ENCODE measurements at regions of chr12 and their contacts with region 1.

Region 1: GRCh38 chr12:11202811-11203210 is 16.1 kb upstream of the TAS2R42 start:
- DNase-seq: no peak
- CTCF ChIP-seq: no peak

Region 2: GRCh38 chr12:10771132-10771733 is 431.6 kb before region 1 on chr12:
- in situ Hi-C with region 1: loop called (anchors 10 kb)
- DNase-seq: peak; percentile 23
- CTCF ChIP-seq: peak; percentile 61